ENCODE measurements at regions of chr1 and their contacts with region 1.

Region 1: DNA sequence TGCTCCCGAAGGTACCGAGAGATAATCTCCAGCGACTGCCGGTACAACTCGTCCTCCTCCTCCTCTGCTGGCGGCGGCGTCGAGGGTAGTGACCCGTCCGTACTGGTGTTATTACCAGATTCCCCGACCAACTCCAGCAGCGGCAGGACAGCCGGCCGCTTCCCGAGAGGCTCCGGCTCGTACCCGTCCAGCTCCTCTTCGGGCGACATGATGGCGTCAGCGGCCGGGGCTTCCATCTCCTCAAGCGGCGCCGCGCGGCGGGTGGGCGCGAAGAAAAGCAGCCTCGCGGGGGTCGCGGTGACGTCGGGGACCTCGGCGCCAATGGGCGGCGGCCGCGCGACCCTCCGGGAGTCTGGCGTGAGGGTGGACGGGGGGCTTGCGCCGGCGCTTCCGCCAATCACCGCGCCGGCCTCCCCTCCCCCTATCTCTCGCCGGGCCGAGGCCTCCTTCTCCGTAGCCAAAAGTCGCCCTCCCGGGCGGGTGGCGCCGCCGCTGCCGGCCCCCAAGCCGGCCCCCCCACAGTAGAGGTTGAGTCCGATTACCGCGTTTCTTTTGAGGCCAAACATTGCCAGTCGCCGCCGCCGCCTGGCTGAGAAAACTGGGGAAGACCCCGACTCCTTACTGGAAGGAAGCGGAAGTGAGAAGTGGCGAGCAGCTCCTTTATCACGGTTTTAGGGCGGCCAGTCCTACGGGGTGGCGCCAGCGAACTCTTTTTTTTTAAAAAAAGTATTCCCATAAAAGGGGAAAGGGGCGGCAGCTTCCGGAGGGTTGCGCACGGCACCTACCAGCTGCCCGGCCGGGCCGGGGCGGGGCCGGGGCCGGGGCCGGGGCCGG is at the start of gene MCL1:
- DNase-seq: peak; percentile 94

Region 2: GRCh38 chr1:150515328-150516048 is 63.7 kb before region 1 on chr1 and contains the start of gene FALEC:
- CTCF ChIA-PET with region 1: no interaction called
- POLR2A ChIA-PET with region 1: interaction called, 13 read pairs
- DNase-seq: peak; percentile 100

Region 3: DNA sequence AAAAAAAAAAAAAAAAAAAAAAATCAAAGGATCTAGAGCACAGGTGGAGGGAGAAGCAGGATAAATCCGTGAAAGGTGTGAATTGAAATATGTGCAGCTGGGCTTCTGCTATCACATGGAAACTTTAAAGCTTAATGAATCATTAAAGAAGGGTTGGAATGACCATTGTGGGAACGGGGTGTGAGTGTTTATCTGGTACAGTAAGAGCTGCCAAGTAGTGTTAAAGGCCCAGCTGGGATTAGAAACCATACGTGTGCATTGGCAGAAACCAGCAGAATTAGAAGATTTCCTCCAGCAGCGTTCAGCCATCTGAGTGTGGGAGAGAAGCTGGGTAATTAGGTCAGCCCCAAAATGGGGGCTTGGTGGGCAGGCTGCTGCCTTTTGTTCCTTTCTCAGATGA is 50.2 kb before region 1 on chr1:
- CTCF ChIA-PET with region 1: no interaction called
- POLR2A ChIA-PET with region 1: no interaction called
- DNase-seq: no peak

Region 4: GRCh38 chr1:150567717-150568593 is 11.2 kb before region 1 on chr1:
- CTCF ChIA-PET with region 1: no interaction called
- POLR2A ChIA-PET with region 1: interaction called, 260 read pairs
- DNase-seq: peak; percentile 37

Region 5: DNA sequence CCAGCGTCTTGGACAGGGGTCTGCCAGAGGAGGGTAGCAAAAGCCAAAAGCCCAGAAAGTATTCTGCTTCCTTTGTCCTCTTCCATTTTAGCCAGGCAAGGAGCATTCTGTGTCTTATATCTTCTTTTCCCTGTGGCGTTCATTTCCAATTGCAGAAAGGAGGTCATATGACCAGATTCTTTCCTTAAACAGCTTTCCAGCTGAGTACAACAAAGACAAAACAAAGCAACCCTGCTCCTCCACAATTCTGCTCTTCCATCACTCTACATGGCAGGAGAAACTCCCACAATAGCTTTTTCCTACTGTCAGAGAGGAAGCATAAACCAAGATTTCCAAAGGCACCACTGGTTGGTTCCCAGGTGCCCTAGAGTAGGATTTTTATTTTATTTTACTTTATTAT is 30.6 kb after region 1 on chr1:
- CTCF ChIA-PET with region 1: no interaction called
- POLR2A ChIA-PET with region 1: interaction called, 63 read pairs
- DNase-seq: no peak

Region 6: GRCh38 chr1:150629115-150629928 is 50.1 kb after region 1 on chr1 and contains the start of gene ENSA:
- CTCF ChIA-PET with region 1: no interaction called
- POLR2A ChIA-PET with region 1: interaction called, 57 read pairs
- DNase-seq: peak; percentile 97

Region 7: GRCh38 chr1:150661156-150661555 is 82.0 kb after region 1 on chr1:
- CTCF ChIA-PET with region 1: no interaction called
- POLR2A ChIA-PET with region 1: no interaction called
- DNase-seq: no peak

Region 8: DNA sequence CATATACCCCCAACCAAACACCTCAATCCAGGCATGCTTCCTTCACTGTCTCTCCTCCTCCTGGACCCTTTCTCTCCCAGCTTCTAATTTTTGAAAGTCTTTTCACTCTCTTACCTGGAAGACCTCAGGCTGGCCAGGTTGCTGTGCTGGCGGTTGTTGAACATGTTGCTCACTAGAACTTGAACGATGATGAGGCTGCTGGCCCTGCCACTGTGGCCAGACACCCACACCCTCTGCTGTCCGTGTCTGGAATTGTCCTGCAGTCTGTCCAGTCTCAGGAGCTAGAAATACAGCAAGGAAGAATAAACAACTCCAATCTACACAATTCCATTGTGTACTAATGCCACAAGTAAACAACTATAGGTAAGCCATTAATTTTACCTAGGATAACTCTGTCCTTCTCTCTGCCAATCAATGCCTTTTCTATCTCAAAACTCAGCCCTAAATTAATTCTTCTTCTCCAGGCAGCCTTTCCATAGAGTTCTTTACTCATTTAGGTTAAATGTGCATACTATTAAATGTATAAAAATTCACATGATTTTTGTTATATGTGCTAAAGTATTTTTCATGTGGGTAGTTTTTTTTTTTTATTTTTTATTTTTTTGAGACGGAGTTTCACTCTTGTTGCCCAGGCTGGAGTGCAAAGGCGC is 234.0 kb after region 1 on chr1:
- CTCF ChIA-PET with region 1: no interaction called
- POLR2A ChIA-PET with region 1: interaction called, 12 read pairs
- DNase-seq: peak; percentile 74